Aorta (tissue), 5 donors: ENCODE measurements at regions of chr17 and their contacts with region 1.

Region 1: GRCh38 chr17:81101614-81102306 is 63.5 kb upstream of the PVALEF start:
- DNase-seq: peak; percentile 90 to 93
- ATAC-seq: peak; percentile 90
- H3K4me3 ChIP-seq: no peak overlapping the region
- H3K27ac ChIP-seq: no peak overlapping the region
- H3K4me1 ChIP-seq: no peaks in the 10 kb centered on the region
- H3K27me3 ChIP-seq: no peaks in the 10 kb centered on the region

Region 2: DNA sequence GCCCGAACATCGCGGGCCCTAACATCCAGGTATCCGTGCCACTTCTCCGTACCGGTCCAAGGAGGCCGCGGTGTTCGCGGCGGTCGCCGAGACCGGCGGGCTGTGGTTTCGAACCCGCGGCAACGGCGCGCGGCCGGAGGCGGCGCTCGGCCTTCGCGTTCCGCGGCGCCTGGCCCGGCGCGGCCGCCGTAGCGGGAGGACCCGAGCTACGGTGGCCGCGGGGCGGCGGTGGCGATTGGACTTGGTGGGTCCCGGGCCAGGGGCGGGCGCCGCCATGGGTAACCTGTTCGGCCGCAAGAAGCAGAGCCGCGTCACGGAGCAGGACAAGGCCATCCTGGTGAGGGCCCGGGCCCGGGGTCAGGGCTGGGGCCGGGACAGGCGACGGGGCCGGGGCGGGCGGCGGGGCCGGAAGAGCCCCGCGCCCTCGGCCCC is 110.1 kb before region 1 on chr17 and contains the start of gene CHMP6:
- intact Hi-C with region 1: loop called (anchors 1 to 2 kb)
- DNase-seq: peak; percentile 87 to 93
- ATAC-seq: peak; percentile 82
- H3K4me3 ChIP-seq: peak within 1 kb of the TSS; percentile 94
- H3K27ac ChIP-seq: no peak within 1 kb of the TSS
- H3K4me1 ChIP-seq: no peaks in the 10 kb centered on the region
- H3K27me3 ChIP-seq: no peaks in the 10 kb centered on the region
- total RNA-seq, gene CHMP6: 22.9 to 30.9 TPM

Region 3: GRCh38 chr17:81018044-81018802 is 83.5 kb before region 1 on chr17:
- intact Hi-C with region 1: loop called in 1 of 2 experiments (anchors 1 kb)
- DNase-seq: peak in 1 of 2 donors; percentile 64
- ATAC-seq: peak; percentile 72
- H3K4me3 ChIP-seq: no peak overlapping the region
- H3K27ac ChIP-seq: no peak overlapping the region
- H3K4me1 ChIP-seq: no peaks in the 10 kb centered on the region
- H3K27me3 ChIP-seq: no peaks in the 10 kb centered on the region

Region 4: DNA sequence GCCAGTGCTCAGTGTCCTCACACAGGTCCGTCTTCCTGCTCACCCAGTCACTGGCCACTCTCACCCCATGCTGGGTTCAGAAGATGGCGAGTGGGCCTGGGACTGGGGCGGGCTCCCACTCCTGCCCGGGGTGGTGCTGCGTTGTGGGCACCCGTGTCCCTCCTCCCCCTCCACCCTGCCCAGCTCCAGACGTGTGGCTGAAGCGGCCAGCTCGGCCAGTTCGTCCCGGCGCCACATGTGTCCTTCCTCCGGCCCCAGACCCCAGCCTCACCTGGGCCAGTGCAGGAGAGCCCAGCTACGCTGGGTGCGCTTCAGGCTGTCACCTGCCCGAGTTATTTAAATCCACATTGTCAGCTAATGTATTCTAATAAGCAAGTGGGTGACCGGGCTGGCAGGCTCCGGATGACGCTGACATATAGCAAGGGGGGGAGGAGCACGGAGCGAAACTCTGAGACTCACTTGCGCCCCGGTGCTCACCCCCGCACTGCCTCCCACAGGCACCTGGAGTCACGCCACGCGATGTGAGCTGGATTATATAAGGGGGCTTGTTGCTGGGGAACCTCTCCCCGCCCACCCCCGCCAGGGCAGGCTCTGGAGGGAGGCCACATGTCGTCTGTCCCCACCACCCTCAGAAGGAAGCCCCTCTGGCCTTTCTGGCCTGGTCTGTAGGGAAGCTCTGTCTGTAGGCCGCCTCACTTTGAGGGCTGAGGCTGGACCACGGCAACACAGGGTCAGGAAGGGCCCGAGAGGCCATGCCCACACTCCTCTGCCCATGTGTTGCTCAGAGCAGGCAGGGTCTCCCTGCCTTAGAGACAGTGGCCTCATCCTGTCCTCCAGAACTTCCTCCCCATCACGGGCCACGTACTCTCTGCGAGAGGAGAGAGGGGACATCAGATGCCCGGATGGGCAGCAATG is 73.9 kb before region 1 on chr17:
- intact Hi-C with region 1: loop called (anchors 1 to 5 kb)
- DNase-seq: peak in 1 of 2 donors; percentile 48
- ATAC-seq: no peak
- H3K4me3 ChIP-seq: no peak overlapping the region
- H3K27ac ChIP-seq: no peak overlapping the region
- H3K4me1 ChIP-seq: peaks cover 0 to 2% of the 10 kb centered on the region in 2 donors
- H3K27me3 ChIP-seq: no peaks in the 10 kb centered on the region

Region 5: GRCh38 chr17:81034779-81035388 is 66.9 kb before region 1 on chr17 and contains the start of gene BAIAP2:
- intact Hi-C with region 1: loop called in 1 of 2 experiments (anchors 5 kb)
- DNase-seq: peak; percentile 98
- ATAC-seq: peak; percentile 87
- H3K4me3 ChIP-seq: peak within 1 kb of the TSS; percentile 28 to 33
- H3K27ac ChIP-seq: no peak within 1 kb of the TSS
- H3K4me1 ChIP-seq: no peaks in the 10 kb centered on the region
- H3K27me3 ChIP-seq: peaks cover 0 to 2% of the 10 kb centered on the region in 2 donors
- total RNA-seq, gene BAIAP2: 19.2 to 23.7 TPM